ENCODE measurements at regions of chr2 and their contacts with region 1.

Region 1: GRCh38 chr2:236569573-236569973 is at the start of gene ACKR3:
- DNase-seq: peak; percentile 82
- ATAC-seq: peak; percentile 99
- H3K4me3 Mint-ChIP-seq: peak within 1 kb of the TSS; percentile 74
- H3K27ac Mint-ChIP-seq: no peak within 1 kb of the TSS
- H3K4me1 Mint-ChIP-seq: peaks cover 17% of the 10 kb centered on the region
- H3K27me3 Mint-ChIP-seq: no peaks in the 10 kb centered on the region
- total RNA-seq, gene ACKR3: 1.2 to 2.4 TPM

Region 2: GRCh38 chr2:236352761-236353593 is 216.6 kb before region 1 on chr2:
- CTCF ChIA-PET with region 1: interaction called, 15 read pairs
- POLR2A ChIA-PET with region 1: no interaction called
- intact Hi-C with region 1: loop called (anchors 1 to 2 kb)
- DNase-seq: peak; percentile 48
- ATAC-seq: peak; percentile 36
- H3K4me3 Mint-ChIP-seq: no peak overlapping the region
- H3K27ac Mint-ChIP-seq: no peak overlapping the region
- H3K4me1 Mint-ChIP-seq: peaks cover 2% of the 10 kb centered on the region
- H3K27me3 Mint-ChIP-seq: peaks cover 2% of the 10 kb centered on the region

Region 3: DNA sequence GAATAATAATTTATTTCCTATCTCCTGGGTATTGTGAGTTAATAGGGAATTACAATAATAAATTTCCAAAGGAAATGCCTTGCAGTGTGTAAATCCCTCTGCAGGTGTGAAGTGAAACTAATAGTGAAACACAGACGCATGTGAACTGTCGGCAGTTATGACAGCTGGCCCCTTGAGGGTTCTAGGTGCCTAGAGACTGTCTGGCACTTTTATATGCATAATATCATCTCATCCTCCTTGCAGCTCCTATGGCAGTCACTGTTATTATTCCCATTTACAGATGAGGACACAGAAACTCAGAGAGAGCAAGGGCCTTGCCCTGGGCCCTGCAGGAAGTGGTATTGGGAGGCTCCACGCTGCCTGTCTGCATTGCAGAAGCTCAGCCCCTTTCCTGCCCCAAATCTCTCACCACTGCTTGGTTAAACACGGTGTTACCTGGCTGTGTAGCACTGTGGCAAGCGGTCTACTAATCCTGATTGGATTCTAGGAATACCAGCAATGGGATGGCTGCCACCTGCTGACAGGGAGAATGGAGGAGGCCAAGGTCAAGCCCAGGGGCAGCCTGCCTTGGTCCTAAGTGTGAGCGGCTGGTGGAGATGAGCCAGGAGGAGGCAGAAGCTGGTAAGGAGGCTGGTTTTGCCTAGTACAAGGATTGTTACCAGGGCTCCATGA is 32.7 kb before region 1 on chr2:
- CTCF ChIA-PET with region 1: interaction called, 20 read pairs
- POLR2A ChIA-PET with region 1: no interaction called
- intact Hi-C with region 1: loop called in 1 of 2 experiments (anchors 2 kb)
- DNase-seq: peak; percentile 68
- ATAC-seq: peak; percentile 76
- H3K4me3 Mint-ChIP-seq: peak overlapping the region; percentile 86
- H3K27ac Mint-ChIP-seq: peak overlapping the region; percentile 96
- H3K4me1 Mint-ChIP-seq: peaks cover 51% of the 10 kb centered on the region
- H3K27me3 Mint-ChIP-seq: no peaks in the 10 kb centered on the region

Region 4: GRCh38 chr2:236550701-236551465 is 18.7 kb before region 1 on chr2:
- CTCF ChIA-PET with region 1: interaction called, 12 read pairs
- POLR2A ChIA-PET with region 1: no interaction called
- intact Hi-C with region 1: no loop called
- DNase-seq: peak; percentile 69
- ATAC-seq: peak; percentile 17
- H3K4me3 Mint-ChIP-seq: no peak overlapping the region
- H3K27ac Mint-ChIP-seq: no peak overlapping the region
- H3K4me1 Mint-ChIP-seq: peaks cover 97% of the 10 kb centered on the region
- H3K27me3 Mint-ChIP-seq: no peaks in the 10 kb centered on the region

Region 5: GRCh38 chr2:236558993-236559978 is 10.3 kb before region 1 on chr2:
- CTCF ChIA-PET with region 1: interaction called, 20 read pairs
- POLR2A ChIA-PET with region 1: no interaction called
- intact Hi-C with region 1: no loop called
- DNase-seq: no peak
- ATAC-seq: peak; percentile 67
- H3K4me3 Mint-ChIP-seq: peak overlapping the region; percentile 41
- H3K27ac Mint-ChIP-seq: peak overlapping the region; percentile 67
- H3K4me1 Mint-ChIP-seq: peaks cover 47% of the 10 kb centered on the region
- H3K27me3 Mint-ChIP-seq: no peaks in the 10 kb centered on the region

Region 6: GRCh38 chr2:237072067-237072931 is 502.7 kb after region 1 on chr2:
- CTCF ChIA-PET with region 1: no interaction called
- POLR2A ChIA-PET with region 1: no interaction called
- intact Hi-C with region 1: loop called (anchors 5 kb)
- DNase-seq: peak; percentile 82
- ATAC-seq: peak; percentile 39
- H3K4me3 Mint-ChIP-seq: no peak overlapping the region
- H3K27ac Mint-ChIP-seq: no peak overlapping the region
- H3K4me1 Mint-ChIP-seq: no peaks in the 10 kb centered on the region
- H3K27me3 Mint-ChIP-seq: no peaks in the 10 kb centered on the region

Region 7: DNA sequence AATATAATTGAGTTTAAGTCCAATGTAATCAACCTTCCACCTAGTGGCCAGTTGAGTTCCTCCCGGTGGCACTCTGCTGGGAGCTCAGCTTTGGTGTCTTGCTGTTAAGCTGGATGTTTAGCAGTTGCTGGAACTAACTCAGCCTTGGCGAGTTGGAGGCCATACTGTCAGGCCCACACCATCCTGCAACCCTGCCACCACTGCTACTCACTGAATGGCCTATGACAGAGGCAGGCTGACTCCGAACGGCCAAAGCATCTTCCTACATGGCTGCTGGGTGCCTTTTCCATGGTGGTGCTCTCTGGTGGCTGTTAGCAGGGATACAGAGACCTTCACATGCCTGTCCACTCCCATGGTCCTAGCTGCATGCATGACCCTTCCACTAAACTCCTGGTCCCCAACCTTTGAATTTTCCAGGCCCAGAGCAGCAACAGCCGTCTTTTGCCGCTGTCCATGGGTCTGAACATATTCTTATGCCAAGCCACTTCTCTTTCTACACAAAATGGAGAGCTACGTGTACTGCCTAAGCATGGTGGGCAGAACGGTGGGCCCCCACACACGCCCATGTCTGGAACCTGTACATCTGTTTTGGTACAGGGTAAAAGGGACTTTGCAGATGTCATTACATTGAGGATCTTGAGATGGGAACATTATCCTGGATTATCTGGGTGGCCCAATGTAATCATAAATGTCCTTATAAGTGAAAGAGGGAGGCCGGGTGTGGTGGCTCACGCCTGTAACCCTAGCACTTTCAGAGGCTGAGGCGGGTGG is 1735.7 kb after region 1 on chr2:
- CTCF ChIA-PET with region 1: no interaction called
- POLR2A ChIA-PET with region 1: no interaction called
- intact Hi-C with region 1: no loop called
- DNase-seq: no peak
- ATAC-seq: no peak
- H3K4me3 Mint-ChIP-seq: no peak overlapping the region
- H3K27ac Mint-ChIP-seq: no peak overlapping the region
- H3K4me1 Mint-ChIP-seq: no peaks in the 10 kb centered on the region
- H3K27me3 Mint-ChIP-seq: no peaks in the 10 kb centered on the region